ENCODE measurements at regions of chr1 and their contacts with region 1.

Region 1: GRCh38 chr1:7902478-7903085 is 38.1 kb downstream of the TNFRSF9 start:
- DNase-seq: peak; percentile 27
- ATAC-seq: peak; percentile 81
- H3K4me3 ChIP-seq: no peak overlapping the region; a peak in 1 of 6 replicates
- H3K27ac ChIP-seq: no peak overlapping the region
- H3K4me1 ChIP-seq: no peaks in the 10 kb centered on the region
- H3K27me3 ChIP-seq: peaks cover 1 to 18% of the 10 kb centered on the region in 2 experiments; a peak in 4 of 5 replicates
- CTCF ChIP-seq: peak; percentile 87
- EP300 ChIP-seq: no peak
- POLR2A ChIP-seq: no peak
- RAD21 ChIP-seq: peak; percentile 64

Region 2: GRCh38 chr1:7719468-7720094 is 183.0 kb before region 1 on chr1:
- CTCF ChIA-PET with region 1: no interaction called
- POLR2A ChIA-PET with region 1: no interaction called
- in situ Hi-C with region 1: no loop called
- intact Hi-C with region 1: no loop called
- DNase-seq: no peak
- ATAC-seq: no peak
- H3K4me3 ChIP-seq: no peak overlapping the region
- H3K27ac ChIP-seq: no peak overlapping the region
- H3K4me1 ChIP-seq: peaks cover 23% of the 10 kb centered on the region
- H3K27me3 ChIP-seq: no peaks in the 10 kb centered on the region
- CTCF ChIP-seq: no peak
- EP300 ChIP-seq: no peak
- POLR2A ChIP-seq: no peak
- RAD21 ChIP-seq: no peak

Region 3: GRCh38 chr1:7808253-7808844 is 94.2 kb before region 1 on chr1:
- CTCF ChIA-PET with region 1: interaction called, 7 read pairs
- POLR2A ChIA-PET with region 1: no interaction called
- in situ Hi-C with region 1: loop called (anchors 5 kb)
- intact Hi-C with region 1: no loop called
- DNase-seq: peak; percentile 30
- ATAC-seq: peak; percentile 36; the same call in 1 of the 3 replicates
- H3K4me3 ChIP-seq: no peak overlapping the region
- H3K27ac ChIP-seq: no peak overlapping the region
- H3K4me1 ChIP-seq: no peaks in the 10 kb centered on the region
- H3K27me3 ChIP-seq: no peaks in the 10 kb centered on the region
- CTCF ChIP-seq: peak; percentile 47
- EP300 ChIP-seq: no peak
- POLR2A ChIP-seq: no peak
- RAD21 ChIP-seq: no peak

Region 4: GRCh38 chr1:7930645-7931445 is 28.3 kb after region 1 on chr1:
- CTCF ChIA-PET with region 1: no interaction called
- POLR2A ChIA-PET with region 1: no interaction called
- in situ Hi-C with region 1: no loop called
- intact Hi-C with region 1: no loop called
- DNase-seq: no peak
- ATAC-seq: no peak
- H3K4me3 ChIP-seq: no peak overlapping the region
- H3K27ac ChIP-seq: no peak overlapping the region
- H3K4me1 ChIP-seq: no peaks in the 10 kb centered on the region
- H3K27me3 ChIP-seq: peaks cover 1 to 11% of the 10 kb centered on the region in 2 experiments; a peak in 1 of 5 replicates
- CTCF ChIP-seq: no peak
- EP300 ChIP-seq: no peak
- POLR2A ChIP-seq: no peak
- RAD21 ChIP-seq: no peak